Tibial artery (tissue), 4 donors: ENCODE measurements at regions of chr15 and their contacts with region 1.

Region 1: DNA sequence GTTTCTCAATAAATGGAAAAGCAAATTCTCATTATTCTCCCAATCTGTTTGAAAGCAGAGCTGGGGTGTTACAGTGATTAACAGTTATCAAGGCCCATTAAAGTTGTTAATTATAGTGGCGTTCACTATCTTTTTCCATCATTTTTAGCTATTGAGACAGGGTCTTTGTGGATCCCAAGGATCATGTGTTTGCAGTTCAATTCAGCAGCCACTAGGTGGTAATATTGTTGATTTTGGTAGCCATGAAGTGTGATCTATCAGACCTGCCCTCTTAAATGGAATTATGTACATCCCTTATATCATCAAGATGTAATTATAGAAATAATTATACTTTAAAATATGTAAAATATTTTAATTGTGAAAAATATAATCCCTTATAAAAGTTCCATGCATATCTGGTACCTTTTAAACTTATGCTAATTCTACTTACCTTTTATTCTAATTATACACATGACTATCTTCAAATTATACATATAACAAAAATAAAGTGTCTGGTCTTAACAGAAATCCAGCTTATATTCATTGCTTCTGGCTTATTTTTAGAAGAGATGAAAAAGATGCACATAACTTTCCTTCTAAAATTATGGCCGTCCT is 126.4 kb downstream of the GREM1 start:
- DNase-seq: no peak
- H3K4me3 ChIP-seq: no peak overlapping the region
- H3K27ac ChIP-seq: no peak overlapping the region
- H3K4me1 ChIP-seq: no peaks in the 10 kb centered on the region
- H3K27me3 ChIP-seq: peaks cover 0 to under 1% of the 10 kb centered on the region in 2 donors
- CTCF ChIP-seq: peak; percentile 58 to 60

Region 2: GRCh38 chr15:32659340-32660155 is 184.7 kb before region 1 on chr15:
- intact Hi-C with region 1: loop called (anchors 10 kb)
- DNase-seq: peak; percentile 41 to 73
- H3K4me3 ChIP-seq: no peak overlapping the region
- H3K27ac ChIP-seq: peak overlapping the region; percentile 39 to 47
- H3K4me1 ChIP-seq: peaks cover 0 to 30% (median 9%) of the 10 kb centered on the region in 4 donors
- H3K27me3 ChIP-seq: no peaks in the 10 kb centered on the region
- CTCF ChIP-seq: peak; percentile 13 to 33

Region 3: GRCh38 chr15:32942401-32942841 is 98.2 kb after region 1 on chr15:
- intact Hi-C with region 1: loop called (anchors 10 kb)
- DNase-seq: no peak
- H3K4me3 ChIP-seq: no peak overlapping the region
- H3K27ac ChIP-seq: peak overlapping the region in 1 of 2 donors; percentile 26
- H3K4me1 ChIP-seq: peaks cover 0 to 15% (median 11%) of the 10 kb centered on the region in 4 donors
- H3K27me3 ChIP-seq: no peaks in the 10 kb centered on the region
- CTCF ChIP-seq: no peak